Activated CD8-positive, alpha-beta memory T cell treated with anti-CD3 and anti-CD28 coated beads, Interleukin-2, amount 10 ng/mL, durations not matched to agents 7 days and 5 days (primary cell): ENCODE measurements at regions of chr6 and their contacts with region 1.

Region 1: DNA sequence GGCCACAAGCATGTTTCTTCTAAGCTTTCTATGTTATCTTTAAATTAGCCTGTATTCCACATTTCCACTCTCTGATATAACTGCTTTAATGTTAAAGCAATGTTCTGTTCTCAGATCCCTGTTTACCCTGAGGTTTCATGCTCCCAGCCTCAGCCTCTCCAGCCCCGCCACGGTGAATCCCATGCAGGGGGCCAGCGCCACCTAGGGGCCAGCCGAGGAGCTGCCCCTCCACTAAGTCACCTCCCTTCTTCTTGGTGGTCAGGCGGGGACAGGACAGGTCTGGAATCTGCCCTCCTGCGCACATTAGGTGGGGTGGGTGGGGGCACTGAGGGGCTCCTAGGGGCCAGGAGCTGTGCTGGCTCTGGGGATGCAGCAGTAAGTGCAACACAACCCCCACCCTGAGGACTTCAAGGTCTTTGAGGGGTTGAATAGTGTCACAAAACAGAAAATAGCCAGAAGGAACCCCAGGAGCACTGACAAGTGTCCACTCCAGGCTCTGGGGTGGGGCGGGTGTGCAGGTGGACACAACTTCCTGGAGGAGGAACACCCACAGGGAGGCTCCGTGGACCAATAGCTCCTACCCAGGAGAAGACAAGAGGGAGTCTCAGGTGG is 61.6 kb downstream of the RAB44 start:
- DNase-seq: peak; percentile 85
- ATAC-seq: peak; percentile 61
- H3K4me3 Mint-ChIP-seq: no peak overlapping the region
- H3K27ac Mint-ChIP-seq: no peak overlapping the region
- H3K4me1 Mint-ChIP-seq: peaks cover 46% of the 10 kb centered on the region
- H3K27me3 Mint-ChIP-seq: no peaks in the 10 kb centered on the region

Region 2: GRCh38 chr6:36605560-36606391 is 153.5 kb before region 1 on chr6:
- CTCF ChIA-PET with region 1: interaction called, 13 read pairs
- DNase-seq: no peak
- ATAC-seq: no peak
- H3K4me3 Mint-ChIP-seq: no peak overlapping the region
- H3K27ac Mint-ChIP-seq: peak overlapping the region; percentile 58
- H3K4me1 Mint-ChIP-seq: peaks cover 56% of the 10 kb centered on the region
- H3K27me3 Mint-ChIP-seq: no peaks in the 10 kb centered on the region

Region 3: DNA sequence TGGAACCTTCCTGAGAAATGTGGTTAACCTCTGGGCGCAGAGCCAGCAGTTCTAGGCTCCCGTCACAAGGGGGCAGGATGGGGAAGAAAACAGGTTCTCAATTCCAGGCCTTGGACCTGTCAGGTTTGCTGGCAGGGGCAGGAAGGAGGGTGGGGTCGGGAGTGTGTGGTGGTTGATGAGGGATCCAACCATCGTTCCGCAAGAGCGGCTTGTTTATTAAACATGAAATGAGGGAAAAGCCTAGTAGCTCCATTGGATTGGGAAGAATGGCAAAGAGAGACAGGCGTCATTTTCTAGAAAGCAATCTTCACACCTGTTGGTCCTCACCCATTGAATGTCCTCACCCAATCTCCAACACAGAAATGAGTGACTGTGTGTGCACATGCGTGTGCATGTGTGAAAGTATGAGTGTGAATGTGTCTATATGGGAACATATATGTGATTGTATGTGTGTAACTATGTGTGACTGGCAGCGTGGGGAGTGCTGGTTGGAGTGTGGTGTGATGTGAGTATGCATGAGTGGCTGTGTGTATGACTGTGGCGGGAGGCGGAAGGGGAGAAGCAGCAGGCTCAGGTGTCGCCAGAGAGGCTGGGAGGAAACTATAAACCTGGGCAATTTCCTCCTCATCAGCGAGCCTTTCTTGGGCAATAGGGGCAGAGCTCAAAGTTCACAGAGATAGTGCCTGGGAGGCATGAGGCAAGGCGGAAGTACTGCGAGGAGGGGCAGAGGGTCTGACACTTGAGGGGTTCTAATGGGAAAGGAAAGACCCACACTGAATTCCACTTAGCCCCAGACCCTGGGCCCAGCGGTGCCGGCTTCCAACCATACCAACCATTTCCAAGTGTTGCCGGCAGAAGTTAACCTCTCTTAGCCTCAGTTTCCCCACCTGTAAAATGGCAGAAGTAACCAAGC is 135.5 kb before region 1 on chr6:
- CTCF ChIA-PET with region 1: interaction called, 57 read pairs
- DNase-seq: peak; percentile 84
- ATAC-seq: peak; percentile 75
- H3K4me3 Mint-ChIP-seq: no peak overlapping the region
- H3K27ac Mint-ChIP-seq: peak overlapping the region; percentile 53
- H3K4me1 Mint-ChIP-seq: peaks cover 24% of the 10 kb centered on the region
- H3K27me3 Mint-ChIP-seq: no peaks in the 10 kb centered on the region

Region 4: DNA sequence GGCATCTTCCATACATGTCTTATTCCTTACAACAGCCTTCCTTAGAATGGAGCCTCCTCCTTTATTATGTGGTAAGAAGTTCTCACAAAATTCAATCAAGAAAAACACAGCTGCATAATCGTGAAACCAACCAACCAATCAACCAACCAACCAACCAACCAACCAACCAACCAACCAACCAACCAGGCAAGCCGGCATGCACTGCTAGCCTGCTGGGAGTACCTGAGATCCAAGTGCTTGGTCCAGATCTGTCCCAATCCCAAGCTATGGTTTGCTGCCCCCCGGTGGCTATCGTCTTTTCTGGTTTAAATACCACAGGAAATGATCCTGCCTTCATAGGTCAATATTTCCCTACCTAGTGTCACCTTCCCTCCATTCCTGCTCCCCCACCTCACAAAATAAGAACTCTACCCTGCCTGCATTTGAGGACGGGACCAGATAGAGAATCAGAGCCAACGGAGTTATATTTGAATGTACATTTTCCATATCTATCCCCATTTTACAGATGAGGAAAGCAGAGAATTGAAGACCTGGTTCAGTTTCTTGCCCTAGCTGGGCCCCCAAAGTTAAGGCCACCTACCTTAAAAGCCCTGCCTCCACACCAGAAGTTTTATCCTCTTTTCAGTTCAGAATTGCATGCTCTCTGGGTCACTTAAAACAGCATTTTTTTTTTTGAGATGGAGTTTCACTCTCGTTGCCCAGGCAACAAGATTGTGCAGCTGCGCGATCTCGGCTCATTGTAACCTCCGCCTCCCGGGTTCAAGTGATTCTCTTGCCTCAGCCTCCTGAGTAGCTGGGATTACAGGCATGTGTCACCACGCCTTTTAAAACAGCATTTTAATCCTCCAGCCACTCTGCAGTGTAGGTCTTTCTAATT is 34.5 kb before region 1 on chr6:
- CTCF ChIA-PET with region 1: interaction called, 12 read pairs
- DNase-seq: peak; percentile 75
- ATAC-seq: no peak
- H3K4me3 Mint-ChIP-seq: no peak overlapping the region
- H3K27ac Mint-ChIP-seq: no peak overlapping the region
- H3K4me1 Mint-ChIP-seq: peaks cover 24% of the 10 kb centered on the region
- H3K27me3 Mint-ChIP-seq: no peaks in the 10 kb centered on the region

Region 5: DNA sequence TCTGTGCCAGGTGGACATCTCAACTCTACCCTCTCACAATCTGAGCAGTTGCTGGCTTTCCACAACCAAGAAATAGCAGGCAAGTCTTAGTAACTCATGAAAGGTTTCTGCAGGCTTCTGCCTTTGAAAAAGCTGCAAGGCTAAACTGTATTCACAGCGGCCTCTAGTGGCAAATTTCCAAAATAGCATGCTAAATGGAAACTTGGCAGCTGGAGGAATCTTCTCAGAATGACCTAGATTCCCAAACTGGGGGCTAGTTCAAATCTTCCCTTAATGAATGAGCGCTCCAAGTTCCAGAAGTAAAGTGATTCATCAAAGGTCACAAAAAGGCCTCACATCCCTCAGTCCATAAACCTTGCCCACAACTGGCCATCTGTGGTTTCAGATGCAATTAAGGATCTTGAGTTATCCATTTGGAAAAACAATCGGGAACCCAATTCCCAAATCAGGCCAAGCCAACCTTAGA is 91.9 kb after region 1 on chr6:
- CTCF ChIA-PET with region 1: interaction called, 131 read pairs
- DNase-seq: peak; percentile 57
- ATAC-seq: no peak
- H3K4me3 Mint-ChIP-seq: no peak overlapping the region
- H3K27ac Mint-ChIP-seq: no peak overlapping the region
- H3K4me1 Mint-ChIP-seq: peaks cover 4% of the 10 kb centered on the region
- H3K27me3 Mint-ChIP-seq: no peaks in the 10 kb centered on the region